WTC11 (cell line): ENCODE measurements at regions of chr10 and their contacts with region 1.

Region 1: GRCh38 chr10:50527442-50528043 is 96.2 kb downstream of the SGMS1 start:
- DNase-seq: no peak
- ATAC-seq: no peak
- H3K4me3 Mint-ChIP-seq: no peak overlapping the region
- H3K27ac Mint-ChIP-seq: no peak overlapping the region
- H3K4me1 Mint-ChIP-seq: peaks cover 43% of the 10 kb centered on the region
- H3K27me3 Mint-ChIP-seq: no peaks in the 10 kb centered on the region
- CTCF ChIP-seq: no peak

Region 2: GRCh38 chr10:50501918-50502452 is 25.6 kb before region 1 on chr10:
- CTCF ChIA-PET with region 1: no interaction called
- POLR2A ChIA-PET with region 1: interaction called, 10 read pairs
- DNase-seq: no peak
- ATAC-seq: peak; percentile 83
- H3K4me3 Mint-ChIP-seq: no peak overlapping the region; the same call in 1 of the 2 replicates
- H3K27ac Mint-ChIP-seq: no peak overlapping the region
- H3K4me1 Mint-ChIP-seq: peaks cover 35% of the 10 kb centered on the region
- H3K27me3 Mint-ChIP-seq: no peaks in the 10 kb centered on the region
- CTCF ChIP-seq: no peak